ENCODE measurements at regions of chr22 and their contacts with region 1.

Region 1: GRCh38 chr22:37896181-37896592 is 9.9 kb upstream of the MICALL1 start:
- DNase-seq: peak; percentile 94
- H3K4me3 Mint-ChIP-seq: no peak overlapping the region
- H3K27ac Mint-ChIP-seq: peak overlapping the region; percentile 98
- H3K4me1 Mint-ChIP-seq: peaks cover 39% of the 10 kb centered on the region
- H3K27me3 Mint-ChIP-seq: no peaks in the 10 kb centered on the region
- CTCF ChIP-seq: no peak

Region 2: DNA sequence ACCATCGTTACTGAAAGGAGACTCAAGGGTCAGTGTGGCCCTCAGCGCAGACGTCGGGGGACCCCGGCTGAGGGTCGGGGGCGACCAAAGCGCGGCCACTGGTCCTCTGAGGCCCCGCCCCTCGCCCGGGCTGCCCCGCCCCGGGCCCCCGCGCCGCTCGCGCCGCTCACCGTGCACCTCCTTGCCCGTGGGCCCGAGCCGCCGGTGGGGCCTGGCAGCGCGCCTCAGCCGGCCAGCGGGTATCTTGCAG is 52.5 kb before region 1 on chr22:
- CTCF ChIA-PET with region 1: no interaction called
- POLR2A ChIA-PET with region 1: interaction called, 27 read pairs
- intact Hi-C with region 1: no loop called
- DNase-seq: peak; percentile 17
- H3K4me3 Mint-ChIP-seq: peak overlapping the region; percentile 82
- H3K27ac Mint-ChIP-seq: no peak overlapping the region
- H3K4me1 Mint-ChIP-seq: peaks cover 5% of the 10 kb centered on the region
- H3K27me3 Mint-ChIP-seq: no peaks in the 10 kb centered on the region
- CTCF ChIP-seq: no peak

Region 3: GRCh38 chr22:37933711-37934376 is 37.7 kb after region 1 on chr22:
- CTCF ChIA-PET with region 1: interaction called, 11 read pairs
- POLR2A ChIA-PET with region 1: interaction called, 23 read pairs
- intact Hi-C with region 1: no loop called
- DNase-seq: peak; percentile 95
- H3K4me3 Mint-ChIP-seq: peak overlapping the region; percentile 16
- H3K27ac Mint-ChIP-seq: no peak overlapping the region
- H3K4me1 Mint-ChIP-seq: peaks cover 17% of the 10 kb centered on the region
- H3K27me3 Mint-ChIP-seq: no peaks in the 10 kb centered on the region
- CTCF ChIP-seq: peak; percentile 90

Measured in MCF 10A (cell line).